SK-N-SH (cell line): ENCODE measurements at regions of chr4 and their contacts with region 1.

Region 1: GRCh38 chr4:89226665-89227574 is 80.7 kb downstream of the GPRIN3 start:
- DNase-seq: peak; percentile 56
- H3K4me3 ChIP-seq: peak overlapping the region in 1 of 2 experiments; percentile 9; a peak in 1 of 4 replicates
- H3K27ac ChIP-seq: no peak overlapping the region
- H3K4me1 ChIP-seq: no peaks in the 10 kb centered on the region
- H3K27me3 ChIP-seq: no peaks in the 10 kb centered on the region
- CTCF ChIP-seq: peak; percentile 69
- EP300 ChIP-seq: no peak
- RAD21 ChIP-seq: peak; percentile 90

Region 2: DNA sequence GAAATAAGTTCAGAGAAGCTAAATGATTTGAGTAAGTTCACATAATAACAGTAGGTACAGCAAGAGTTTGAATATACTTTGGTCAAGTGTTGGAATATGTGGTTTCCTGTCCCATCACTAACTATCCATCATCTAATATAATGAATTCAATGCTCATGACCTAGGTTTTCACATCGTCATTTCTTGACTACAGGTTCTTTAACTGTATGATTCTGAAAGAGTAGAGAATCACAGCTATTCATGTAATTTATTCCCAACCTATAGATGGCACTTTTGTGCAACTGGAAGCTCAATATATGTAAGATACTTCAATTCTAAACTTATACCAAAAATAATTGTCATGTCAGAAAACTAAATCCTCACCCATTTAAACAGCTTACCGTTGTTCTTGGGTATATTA is 62.5 kb before region 1 on chr4:
- CTCF ChIA-PET with region 1: interaction called, 10 read pairs
- POLR2A ChIA-PET with region 1: no interaction called
- DNase-seq: no peak
- H3K4me3 ChIP-seq: no peak overlapping the region
- H3K27ac ChIP-seq: no peak overlapping the region
- H3K4me1 ChIP-seq: no peaks in the 10 kb centered on the region
- H3K27me3 ChIP-seq: no peaks in the 10 kb centered on the region
- CTCF ChIP-seq: peak; percentile 15; the same call in 1 of the 2 replicates
- EP300 ChIP-seq: no peak
- RAD21 ChIP-seq: no peak

Region 3: DNA sequence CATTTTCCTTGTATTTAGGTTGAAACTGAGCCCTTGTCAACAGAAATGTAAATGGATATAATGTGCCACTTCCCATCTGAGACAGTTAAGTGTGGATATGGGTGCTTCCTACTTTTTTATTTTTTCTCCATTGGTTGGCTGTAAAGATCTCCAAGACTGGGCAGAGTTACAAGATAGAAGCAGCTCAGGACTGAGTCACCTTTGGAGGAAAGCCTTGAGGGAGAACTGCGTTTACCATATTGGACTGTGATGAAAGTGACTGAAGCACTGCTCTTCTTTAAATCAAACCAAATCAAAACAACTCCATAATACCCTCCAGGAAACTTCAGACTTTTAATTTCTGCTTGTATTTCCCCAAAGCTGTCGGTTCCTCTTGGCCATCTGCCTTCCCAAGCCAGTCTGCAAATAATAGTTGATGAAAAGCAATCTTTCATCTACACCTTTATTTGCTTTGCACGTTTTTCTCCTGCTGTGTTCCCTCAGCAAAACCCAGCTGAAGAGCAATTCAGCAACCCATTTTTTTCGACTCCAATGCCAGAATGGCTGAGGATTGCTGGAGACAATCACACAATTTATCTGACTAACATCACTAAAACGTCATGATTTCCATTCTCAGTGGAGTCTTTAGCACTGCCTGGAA is 13.7 kb before region 1 on chr4:
- CTCF ChIA-PET with region 1: interaction called, 34 read pairs
- POLR2A ChIA-PET with region 1: no interaction called
- DNase-seq: no peak
- H3K4me3 ChIP-seq: no peak overlapping the region
- H3K27ac ChIP-seq: no peak overlapping the region
- H3K4me1 ChIP-seq: no peaks in the 10 kb centered on the region
- H3K27me3 ChIP-seq: no peaks in the 10 kb centered on the region
- CTCF ChIP-seq: no peak
- EP300 ChIP-seq: no peak
- RAD21 ChIP-seq: no peak

Region 4: GRCh38 chr4:89248879-89249281 is 22.0 kb after region 1 on chr4:
- CTCF ChIA-PET with region 1: interaction called, 26 read pairs
- POLR2A ChIA-PET with region 1: no interaction called
- DNase-seq: no peak
- H3K4me3 ChIP-seq: no peak overlapping the region
- H3K27ac ChIP-seq: no peak overlapping the region
- H3K4me1 ChIP-seq: no peaks in the 10 kb centered on the region
- H3K27me3 ChIP-seq: no peaks in the 10 kb centered on the region
- CTCF ChIP-seq: no peak
- EP300 ChIP-seq: no peak
- RAD21 ChIP-seq: no peak

Region 5: GRCh38 chr4:89365776-89366175 is 138.9 kb after region 1 on chr4:
- CTCF ChIA-PET with region 1: no interaction called
- POLR2A ChIA-PET with region 1: no interaction called
- DNase-seq: no peak
- H3K4me3 ChIP-seq: no peak overlapping the region
- H3K27ac ChIP-seq: no peak overlapping the region
- H3K4me1 ChIP-seq: no peaks in the 10 kb centered on the region
- H3K27me3 ChIP-seq: no peaks in the 10 kb centered on the region
- CTCF ChIP-seq: no peak
- EP300 ChIP-seq: no peak
- RAD21 ChIP-seq: no peak

Region 6: GRCh38 chr4:89434364-89434988 is 207.6 kb after region 1 on chr4:
- CTCF ChIA-PET with region 1: interaction called, 76 read pairs
- POLR2A ChIA-PET with region 1: no interaction called
- DNase-seq: peak; percentile 34
- H3K4me3 ChIP-seq: no peak overlapping the region; a peak in 1 of 4 replicates
- H3K27ac ChIP-seq: no peak overlapping the region
- H3K4me1 ChIP-seq: no peaks in the 10 kb centered on the region
- H3K27me3 ChIP-seq: no peaks in the 10 kb centered on the region
- CTCF ChIP-seq: peak; percentile 77
- EP300 ChIP-seq: no peak
- RAD21 ChIP-seq: peak; percentile 91